Right cardiac atrium (tissue), 5 donors: ENCODE measurements at regions of chr13 and their contacts with region 1.

Region 1: GRCh38 chr13:33110713-33111413 is 94.6 kb downstream of the KL start:
- DNase-seq: peak; percentile 73 to 88 (median 88)
- ATAC-seq: peak; percentile 72 to 79
- H3K4me3 ChIP-seq: no peak overlapping the region
- H3K27ac ChIP-seq: peak overlapping the region; percentile 60
- H3K4me1 ChIP-seq: peaks cover 17% of the 10 kb centered on the region
- H3K27me3 ChIP-seq: no peaks in the 10 kb centered on the region

Region 2: GRCh38 chr13:32548837-32549236 is 562.0 kb before region 1 on chr13:
- intact Hi-C with region 1: no loop called
- DNase-seq: no peak
- ATAC-seq: no peak
- H3K4me3 ChIP-seq: no peak overlapping the region
- H3K27ac ChIP-seq: no peak overlapping the region
- H3K4me1 ChIP-seq: no peaks in the 10 kb centered on the region
- H3K27me3 ChIP-seq: no peaks in the 10 kb centered on the region

Region 3: GRCh38 chr13:32737111-32737571 is 373.7 kb before region 1 on chr13:
- intact Hi-C with region 1: loop called in 1 of 4 experiments (anchors 10 kb)
- DNase-seq: no peak
- ATAC-seq: peak; percentile 61 to 62
- H3K4me3 ChIP-seq: peak overlapping the region; percentile 50
- H3K27ac ChIP-seq: no peak overlapping the region
- H3K4me1 ChIP-seq: no peaks in the 10 kb centered on the region
- H3K27me3 ChIP-seq: no peaks in the 10 kb centered on the region

Region 4: GRCh38 chr13:33728271-33729037 is 617.6 kb after region 1 on chr13:
- intact Hi-C with region 1: no loop called
- DNase-seq: peak; percentile 77 to 90 (median 84)
- ATAC-seq: peak; percentile 88 to 93
- H3K4me3 ChIP-seq: no peak overlapping the region
- H3K27ac ChIP-seq: peak overlapping the region; percentile 64
- H3K4me1 ChIP-seq: peaks cover 2% of the 10 kb centered on the region
- H3K27me3 ChIP-seq: no peaks in the 10 kb centered on the region